AG04449 (cell line): ENCODE measurements at regions of chr17 and their contacts with region 1.

Region 1: DNA sequence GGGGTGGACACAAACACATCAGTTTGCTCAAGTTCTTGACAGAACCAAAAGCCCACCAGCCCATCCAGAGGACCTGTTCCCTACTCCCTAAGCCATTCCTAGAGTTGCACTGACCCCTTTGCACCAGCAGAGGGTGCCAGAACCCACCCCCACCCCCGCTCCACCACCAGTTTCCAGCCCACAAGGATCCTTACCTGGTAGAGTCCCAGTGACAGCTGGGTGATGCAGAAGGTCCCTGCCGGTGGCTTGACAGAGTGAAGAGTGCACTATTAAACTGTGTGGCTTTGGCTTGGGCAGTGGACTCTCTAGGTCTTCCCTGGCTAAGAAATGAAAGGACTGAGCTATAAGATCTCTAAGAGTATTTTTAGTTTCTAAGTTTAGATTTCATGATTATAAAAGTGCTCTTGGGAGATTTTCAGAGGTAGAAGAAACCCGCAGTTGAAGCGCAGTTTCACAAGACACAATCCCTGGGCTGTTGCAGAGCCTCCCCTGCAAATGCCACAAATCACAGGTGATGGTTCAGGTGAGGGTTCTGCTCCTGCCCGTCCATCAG is 73.3 kb upstream of the MTMR4 start:
- DNase-seq: no peak
- H3K4me3 ChIP-seq: no peak overlapping the region
- CTCF ChIP-seq: peak; percentile 96

Region 2: GRCh38 chr17:58249270-58250133 is 338.3 kb before region 1 on chr17:
- CTCF ChIA-PET with region 1: no interaction called
- POLR2A ChIA-PET with region 1: no interaction called
- DNase-seq: no peak
- H3K4me3 ChIP-seq: peak overlapping the region; percentile 62
- CTCF ChIP-seq: peak; percentile 95

Region 3: DNA sequence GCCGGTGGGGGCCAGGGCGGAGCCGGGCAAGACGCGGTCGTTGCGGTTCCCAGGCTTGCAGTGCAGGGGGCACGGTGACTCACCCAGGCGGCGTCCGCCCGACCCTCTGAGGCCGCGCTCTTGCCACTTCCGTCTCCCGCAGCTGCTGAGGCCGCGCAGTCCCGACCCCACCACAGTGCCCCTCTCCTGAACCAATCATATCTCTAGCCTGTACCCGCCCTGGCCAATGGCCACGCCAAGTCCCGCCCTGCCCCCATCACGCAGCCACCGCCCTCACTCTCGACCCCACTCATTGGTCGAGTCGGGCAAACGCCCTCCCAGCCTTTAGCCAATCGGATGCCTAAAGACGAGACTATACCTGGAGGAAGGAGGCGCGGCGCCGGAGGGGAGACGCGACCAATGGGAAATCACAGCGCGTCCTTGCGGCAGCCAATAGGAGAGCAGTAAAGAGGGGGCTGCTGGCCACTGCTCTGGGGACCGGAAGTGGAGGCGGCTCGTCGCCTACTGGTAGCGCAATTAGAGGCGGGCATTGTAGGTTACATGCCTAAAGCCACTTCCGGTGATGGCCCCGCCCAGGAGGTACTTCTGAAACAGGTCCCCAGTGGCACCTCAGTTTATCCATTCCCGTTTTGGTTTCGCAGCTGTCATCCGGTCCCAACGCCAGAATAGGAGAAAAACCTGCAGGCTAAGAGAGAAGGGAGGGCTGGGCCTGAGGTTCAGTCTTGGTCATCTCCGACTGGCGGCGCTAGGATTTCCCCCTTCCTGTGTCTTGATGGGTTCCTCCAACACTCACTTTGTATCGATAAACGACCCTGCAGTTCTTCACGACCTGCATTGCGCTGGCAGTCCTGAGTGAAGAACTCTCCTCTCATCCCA is 69.8 kb before region 1 on chr17:
- CTCF ChIA-PET with region 1: interaction called, 10 read pairs
- POLR2A ChIA-PET with region 1: no interaction called
- DNase-seq: peak; percentile 99
- H3K4me3 ChIP-seq: peak overlapping the region; percentile 84
- CTCF ChIP-seq: no peak

Region 4: GRCh38 chr17:58565780-58566189 is 22.0 kb before region 1 on chr17:
- CTCF ChIA-PET with region 1: interaction called, 12 read pairs
- POLR2A ChIA-PET with region 1: no interaction called
- DNase-seq: no peak
- H3K4me3 ChIP-seq: no peak overlapping the region
- CTCF ChIP-seq: no peak

Region 5: DNA sequence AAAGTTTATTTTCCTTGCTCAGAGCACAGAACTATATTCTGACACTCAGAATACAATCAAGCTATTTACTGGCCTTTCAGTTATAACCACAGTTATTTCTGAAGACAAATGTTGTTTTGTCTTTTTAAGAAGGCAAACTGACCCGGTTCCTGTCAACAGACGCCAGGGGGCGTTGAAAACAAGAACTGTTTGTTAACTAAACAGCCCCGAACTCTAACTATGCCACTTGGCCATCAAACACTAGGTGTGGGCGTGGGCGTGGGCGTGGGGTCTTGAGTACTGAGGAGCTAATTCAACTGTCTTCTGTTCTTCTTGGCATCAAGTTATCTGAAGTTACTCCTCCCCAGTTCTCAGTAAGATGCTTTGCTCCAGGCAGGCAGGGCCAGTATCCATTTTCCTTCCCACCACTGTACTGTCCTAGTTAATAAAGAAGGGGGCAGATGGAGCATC is 10.1 kb before region 1 on chr17:
- CTCF ChIA-PET with region 1: interaction called, 53 read pairs
- POLR2A ChIA-PET with region 1: no interaction called
- DNase-seq: no peak
- H3K4me3 ChIP-seq: no peak overlapping the region
- CTCF ChIP-seq: peak; percentile 55

Region 6: GRCh38 chr17:58631523-58632323 is 43.9 kb after region 1 on chr17:
- CTCF ChIA-PET with region 1: interaction called, 18 read pairs
- POLR2A ChIA-PET with region 1: interaction called, 8 read pairs
- DNase-seq: peak; percentile 98
- H3K4me3 ChIP-seq: peak overlapping the region; percentile 52
- CTCF ChIP-seq: peak; percentile 29